Aorta (tissue), 5 donors: ENCODE measurements at regions of chr15 and their contacts with region 1.

Region 1: DNA sequence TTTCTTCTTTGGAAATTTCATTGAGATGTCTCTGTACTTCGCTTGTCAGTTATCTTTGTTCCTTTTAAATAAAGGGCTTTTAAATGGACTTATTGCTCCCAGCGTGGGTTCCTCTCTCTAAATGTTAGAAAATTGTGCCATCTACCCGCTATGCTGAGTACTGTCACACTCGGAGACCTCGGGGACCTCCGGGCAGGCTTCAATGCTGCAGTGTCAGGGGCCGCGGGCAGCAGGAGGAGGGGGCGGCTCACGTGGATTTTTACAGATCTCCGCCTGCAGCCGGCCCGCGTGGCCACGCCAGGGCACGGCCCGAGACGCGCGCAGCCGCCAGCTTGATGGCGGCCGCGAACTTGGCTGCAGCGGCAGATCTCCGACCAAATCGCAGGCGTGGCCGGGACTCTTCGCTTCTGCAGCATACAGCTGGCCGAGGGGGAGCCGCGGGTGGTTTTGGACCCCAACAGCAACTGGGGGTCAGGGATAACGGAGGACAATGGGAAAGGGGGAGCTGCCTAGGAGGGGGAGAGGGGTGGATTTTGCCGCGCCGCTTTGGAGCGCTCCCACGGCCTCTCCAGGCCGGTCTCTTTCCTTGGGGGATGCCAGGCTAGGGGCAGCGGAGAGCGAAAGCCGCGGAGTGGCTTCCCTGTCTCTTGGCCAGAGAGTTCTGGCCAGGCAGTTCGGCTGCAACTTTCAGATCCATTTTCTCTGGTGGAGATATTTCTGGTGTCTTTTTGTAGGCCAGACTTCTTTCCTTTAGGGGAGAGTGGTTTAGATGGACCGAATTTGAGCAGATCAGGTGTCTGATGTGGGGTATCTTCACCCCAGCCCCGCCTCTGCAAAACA is 15.3 kb downstream of the NR2F2 start:
- DNase-seq: peak; percentile 80 to 89
- ATAC-seq: peak; percentile 83
- H3K4me3 ChIP-seq: peak overlapping the region; percentile 42 to 51
- H3K27ac ChIP-seq: peak overlapping the region in 1 of 2 donors; percentile 70
- H3K4me1 ChIP-seq: no peaks in the 10 kb centered on the region
- H3K27me3 ChIP-seq: no peaks in the 10 kb centered on the region

Region 2: DNA sequence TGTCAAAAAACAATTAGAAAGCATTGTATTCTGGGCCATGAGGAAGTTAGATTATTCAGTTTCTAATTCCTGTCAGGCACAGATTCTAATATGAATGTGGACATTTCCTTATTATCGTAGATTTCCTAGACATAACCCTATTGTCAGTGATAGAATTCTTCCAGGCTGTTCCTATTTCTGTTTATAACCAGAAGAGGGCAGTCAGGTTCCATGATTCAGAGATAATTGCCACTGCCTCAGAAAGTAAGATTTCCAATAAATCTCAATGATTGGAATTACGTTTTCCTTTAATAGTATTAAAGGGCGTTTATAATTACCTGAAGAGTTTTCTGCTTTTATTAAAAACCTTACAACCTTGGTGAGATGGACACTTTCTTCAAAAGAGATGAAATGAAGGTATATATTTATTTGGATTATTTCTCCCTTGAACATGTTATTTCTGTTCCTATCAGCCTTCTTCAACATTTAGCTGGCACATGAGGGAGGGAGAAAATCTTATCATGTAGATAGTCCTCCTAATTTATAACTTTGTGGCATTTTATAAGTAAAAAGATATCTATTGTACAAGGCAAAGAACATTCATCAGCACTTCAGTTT is 1675.2 kb before region 1 on chr15:
- intact Hi-C with region 1: loop called in 1 of 2 experiments (anchors 10 kb)
- DNase-seq: no peak
- ATAC-seq: no peak
- H3K4me3 ChIP-seq: no peak overlapping the region
- H3K27ac ChIP-seq: no peak overlapping the region
- H3K4me1 ChIP-seq: no peaks in the 10 kb centered on the region
- H3K27me3 ChIP-seq: peaks cover 0 to 2% of the 10 kb centered on the region in 2 donors

Region 3: DNA sequence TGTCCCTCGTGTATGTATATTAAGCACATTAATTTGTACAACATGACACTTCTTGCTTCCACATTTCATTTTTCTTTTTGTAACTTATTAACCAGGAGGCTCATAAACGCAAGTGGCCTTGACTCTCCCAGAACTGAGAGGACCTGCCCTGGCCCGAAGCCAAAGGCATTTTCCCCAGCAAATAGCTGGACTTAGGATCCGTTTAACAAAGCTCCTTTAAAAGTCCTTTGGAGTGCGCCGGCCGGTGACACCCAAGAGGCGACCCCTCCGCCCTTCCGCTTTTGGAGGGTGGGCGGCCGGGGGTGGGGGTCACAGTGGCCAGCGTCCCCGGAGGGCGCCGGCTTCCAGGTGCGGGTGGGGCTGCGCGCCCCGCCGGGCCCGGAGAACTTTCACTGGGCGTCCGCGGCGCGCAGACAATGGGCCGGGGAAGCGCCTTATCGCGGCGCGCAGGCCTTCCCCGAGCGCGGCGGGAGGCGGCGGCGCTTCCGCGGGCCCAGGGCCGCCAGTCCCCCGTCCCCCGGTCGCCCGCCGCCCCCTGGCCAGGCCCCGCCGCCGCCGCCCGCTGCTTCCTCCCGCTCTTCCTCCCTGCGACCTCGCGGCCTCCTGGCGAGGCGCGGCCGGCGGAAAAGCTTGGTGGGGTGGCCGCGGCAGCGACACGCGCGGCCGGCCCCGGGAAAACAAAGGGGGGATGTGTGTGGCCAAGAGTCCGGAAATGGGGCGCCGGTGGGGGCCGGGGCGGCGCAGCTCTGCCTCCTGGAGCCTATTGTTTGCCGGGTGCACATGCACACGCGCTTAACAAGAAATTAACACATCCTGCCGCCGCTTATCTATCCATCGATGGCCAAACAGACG is 1501.0 kb before region 1 on chr15:
- intact Hi-C with region 1: loop called (anchors 10 kb)
- DNase-seq: peak; percentile 62 to 88
- ATAC-seq: peak; percentile 75
- H3K4me3 ChIP-seq: peak overlapping the region; percentile 28 to 29
- H3K27ac ChIP-seq: peak overlapping the region; percentile 84 to 89
- H3K4me1 ChIP-seq: peaks cover 0 to 3% of the 10 kb centered on the region in 2 donors
- H3K27me3 ChIP-seq: no peaks in the 10 kb centered on the region

Region 4: GRCh38 chr15:95025924-95026728 is 1319.7 kb before region 1 on chr15:
- intact Hi-C with region 1: loop called in 1 of 2 experiments (anchors 10 kb)
- DNase-seq: peak; percentile 52 to 78
- ATAC-seq: peak; percentile 29
- H3K4me3 ChIP-seq: no peak overlapping the region
- H3K27ac ChIP-seq: no peak overlapping the region
- H3K4me1 ChIP-seq: no peaks in the 10 kb centered on the region
- H3K27me3 ChIP-seq: no peaks in the 10 kb centered on the region

Region 5: DNA sequence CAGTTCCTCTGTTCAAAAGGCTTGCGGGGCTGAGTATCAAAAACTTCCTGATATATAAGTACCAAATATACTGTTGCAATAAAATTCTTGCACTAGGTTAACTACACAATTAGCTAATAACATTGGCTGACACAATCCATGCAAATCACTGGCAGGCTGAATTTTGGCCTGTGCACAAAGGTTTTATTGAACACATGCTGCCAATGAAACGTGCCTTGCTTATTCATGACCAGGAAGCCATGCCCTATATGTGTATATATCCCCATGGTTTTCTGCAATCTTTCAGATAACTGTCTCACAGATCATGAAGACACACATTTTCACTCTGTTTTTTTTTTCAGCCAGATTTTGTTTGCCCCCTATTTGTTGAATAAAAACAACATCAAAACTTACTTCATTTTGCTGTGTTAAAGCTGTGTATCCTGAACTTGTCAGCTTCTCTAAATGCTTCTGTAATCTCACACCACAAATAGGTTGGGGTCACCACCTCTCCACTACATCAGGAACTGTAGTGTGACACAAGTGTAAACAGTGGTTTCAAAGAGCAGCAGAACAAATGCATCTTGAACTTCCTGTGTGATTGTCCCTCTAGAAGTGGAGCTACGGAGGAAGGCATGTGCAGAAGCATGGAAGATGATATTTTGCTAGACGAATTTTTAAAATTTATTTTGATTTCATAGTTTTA is 936.0 kb before region 1 on chr15:
- intact Hi-C with region 1: loop called in 1 of 2 experiments (anchors 10 kb)
- DNase-seq: no peak
- ATAC-seq: no peak
- H3K4me3 ChIP-seq: no peak overlapping the region
- H3K27ac ChIP-seq: no peak overlapping the region
- H3K4me1 ChIP-seq: peaks cover 6 to 8% of the 10 kb centered on the region in 2 donors
- H3K27me3 ChIP-seq: no peaks in the 10 kb centered on the region

Region 6: GRCh38 chr15:97234851-97235610 is 889.3 kb after region 1 on chr15:
- intact Hi-C with region 1: loop called in 1 of 2 experiments (anchors 10 kb)
- DNase-seq: no peak
- ATAC-seq: peak; percentile 79
- H3K4me3 ChIP-seq: no peak overlapping the region
- H3K27ac ChIP-seq: no peak overlapping the region
- H3K4me1 ChIP-seq: no peaks in the 10 kb centered on the region
- H3K27me3 ChIP-seq: no peaks in the 10 kb centered on the region